Prostate gland (tissue), 2 donors: ENCODE measurements at regions of chr2 and their contacts with region 1.

Region 1: GRCh38 chr2:19955544-19956422 is 34.1 kb downstream of the WDR35 start:
- DNase-seq: peak; percentile 28
- H3K4me3 ChIP-seq: no peak overlapping the region
- H3K27ac ChIP-seq: no peak overlapping the region
- H3K4me1 ChIP-seq: no peaks in the 10 kb centered on the region
- H3K27me3 ChIP-seq: no peaks in the 10 kb centered on the region
- CTCF ChIP-seq: peak; percentile 16 to 78 (median 64)
- POLR2A ChIP-seq: no peak

Region 2: GRCh38 chr2:19971691-19972090 is 15.9 kb after region 1 on chr2:
- intact Hi-C with region 1: no loop called
- DNase-seq: no peak
- H3K4me3 ChIP-seq: no peak overlapping the region
- H3K27ac ChIP-seq: no peak overlapping the region
- H3K4me1 ChIP-seq: no peaks in the 10 kb centered on the region
- H3K27me3 ChIP-seq: no peaks in the 10 kb centered on the region
- CTCF ChIP-seq: no peak
- POLR2A ChIP-seq: no peak

Region 3: DNA sequence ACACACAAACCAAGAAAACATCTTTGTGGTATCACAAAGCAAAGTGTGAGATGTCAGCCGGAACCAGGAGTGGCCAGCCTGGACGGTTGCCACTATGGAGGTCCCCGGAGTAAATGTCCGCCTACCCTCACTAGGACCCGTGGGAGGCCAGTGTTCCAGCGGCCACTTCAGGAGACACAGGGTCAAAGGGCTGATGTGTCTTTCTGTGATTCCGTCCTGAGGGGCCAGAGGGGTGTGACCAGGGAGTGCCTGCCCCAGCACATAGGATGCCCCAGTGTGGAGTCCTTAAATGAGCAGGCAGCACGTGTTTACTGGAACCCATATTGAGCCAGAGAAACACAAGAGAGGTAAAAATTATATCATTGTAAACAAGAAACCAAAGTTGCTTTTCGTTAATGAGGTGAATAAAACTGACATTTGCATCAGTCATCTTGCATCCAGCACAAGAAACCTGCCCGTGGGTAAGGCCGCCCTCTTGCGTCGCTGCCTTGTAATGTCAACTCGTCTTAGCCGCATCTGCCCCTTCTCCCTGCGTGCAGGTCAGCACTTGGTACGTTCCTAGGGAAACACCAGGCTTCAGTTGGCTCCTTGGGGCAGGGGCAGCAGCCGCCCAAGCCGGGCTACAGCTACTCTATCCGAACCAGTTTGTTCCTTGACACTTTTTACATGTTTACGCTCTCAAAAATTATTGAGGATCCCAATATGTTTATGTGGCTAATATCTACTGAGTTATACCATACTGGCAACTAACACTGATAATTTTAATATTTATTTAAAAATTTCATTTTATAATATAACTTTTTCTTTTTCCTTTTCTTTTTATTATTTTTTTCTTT is 142.3 kb after region 1 on chr2:
- intact Hi-C with region 1: loop called (anchors 2 kb)
- DNase-seq: peak; percentile 69
- H3K4me3 ChIP-seq: no peak overlapping the region
- H3K27ac ChIP-seq: no peak overlapping the region
- H3K4me1 ChIP-seq: no peaks in the 10 kb centered on the region
- H3K27me3 ChIP-seq: no peaks in the 10 kb centered on the region
- CTCF ChIP-seq: peak; percentile 32 to 88 (median 72)
- POLR2A ChIP-seq: no peak